ENCODE measurements at regions of chr19 and their contacts with region 1.

Region 1: GRCh38 chr19:11019824-11020223 is 59.0 kb downstream of the SMARCA4 start:
- DNase-seq: no peak
- ATAC-seq: peak in 3 of 4 donors; percentile 14 to 26 (median 15)
- H3K4me3 ChIP-seq: no peak overlapping the region
- H3K27ac ChIP-seq: no peak overlapping the region
- H3K4me1 ChIP-seq: no peaks in the 10 kb centered on the region
- H3K27me3 ChIP-seq: no peaks in the 10 kb centered on the region
- CTCF ChIP-seq: no peak

Region 2: GRCh38 chr19:10936661-10937084 is 83.2 kb before region 1 on chr19:
- intact Hi-C with region 1: loop called in 1 of 3 experiments (anchors 10 kb)
- DNase-seq: peak in 4 of 6 donors; percentile 38 to 60 (median 54)
- ATAC-seq: peak; percentile 47 to 80 (median 70)
- H3K4me3 ChIP-seq: no peak overlapping the region
- H3K27ac ChIP-seq: no peak overlapping the region
- H3K4me1 ChIP-seq: peaks cover 4 to 15% (median 10%) of the 10 kb centered on the region in 3 donors
- H3K27me3 ChIP-seq: no peaks in the 10 kb centered on the region
- CTCF ChIP-seq: peak; percentile 21 to 43 (median 34)